Head of caudate nucleus (tissue), 42 donors: ENCODE measurements at regions of chr11 and their contacts with region 1.

Region 1: DNA sequence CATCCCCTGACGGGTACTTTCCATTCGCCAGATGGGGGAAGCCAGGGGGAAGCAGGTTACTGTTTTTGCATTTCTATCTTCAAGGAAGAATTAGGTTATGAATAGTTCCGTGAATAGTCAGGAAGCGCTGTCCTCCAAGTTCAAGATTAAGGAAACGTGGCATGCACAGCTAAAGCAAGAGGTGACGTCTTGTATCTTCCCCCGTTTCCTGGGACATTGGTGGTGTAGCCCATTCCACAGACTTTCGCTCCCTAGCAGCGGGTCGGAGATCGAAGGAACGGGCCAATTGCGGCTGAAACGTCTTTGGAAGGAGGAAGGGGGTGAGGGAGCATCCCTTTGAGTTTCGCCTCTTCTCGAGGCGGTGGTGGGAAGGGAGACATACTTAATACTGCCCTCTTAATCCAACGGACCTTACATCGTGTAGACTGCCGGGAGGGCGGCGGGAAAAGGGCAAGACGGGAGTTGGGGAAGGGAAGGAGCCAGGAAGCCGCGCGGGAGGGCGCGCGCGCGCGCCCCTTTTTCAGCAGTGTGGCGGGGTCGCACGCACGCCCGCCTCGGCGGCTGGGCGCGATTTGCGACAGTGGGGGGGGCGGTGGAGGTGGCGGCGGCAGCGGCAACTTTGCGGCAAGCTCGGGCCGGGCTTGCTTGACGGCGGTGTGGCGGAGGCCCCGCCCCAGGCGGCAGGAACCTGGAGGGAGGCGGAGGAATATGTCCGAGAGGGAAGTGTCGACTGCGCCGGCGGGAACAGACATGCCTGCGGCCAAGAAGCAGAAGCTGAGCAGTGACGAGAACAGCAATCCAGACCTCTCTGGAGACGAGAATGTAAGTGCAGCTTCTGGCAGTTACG is at the start of gene EED:
- DNase-seq: peak; percentile 82 to 98 (median 95)

Region 2: GRCh38 chr11:86302100-86302793 is 57.5 kb after region 1 on chr11 and contains the start of gene HIKESHI:
- intact Hi-C with region 1: loop called (anchors 2 kb)
- DNase-seq: peak; percentile 100